ENCODE measurements at regions of chr2 and their contacts with region 1.

Region 1: GRCh38 chr2:200525882-200526651 is at the start of gene SGO2:
- DNase-seq: peak; percentile 96
- H3K4me3 Mint-ChIP-seq: peak within 1 kb of the TSS; percentile 98
- H3K27ac Mint-ChIP-seq: peak within 1 kb of the TSS; percentile 94
- H3K4me1 Mint-ChIP-seq: peaks cover 30% of the 10 kb centered on the region
- H3K27me3 Mint-ChIP-seq: no peaks in the 10 kb centered on the region
- total RNA-seq, gene SGO2: 30.3 and 32.3 TPM in 2 replicates

Region 2: DNA sequence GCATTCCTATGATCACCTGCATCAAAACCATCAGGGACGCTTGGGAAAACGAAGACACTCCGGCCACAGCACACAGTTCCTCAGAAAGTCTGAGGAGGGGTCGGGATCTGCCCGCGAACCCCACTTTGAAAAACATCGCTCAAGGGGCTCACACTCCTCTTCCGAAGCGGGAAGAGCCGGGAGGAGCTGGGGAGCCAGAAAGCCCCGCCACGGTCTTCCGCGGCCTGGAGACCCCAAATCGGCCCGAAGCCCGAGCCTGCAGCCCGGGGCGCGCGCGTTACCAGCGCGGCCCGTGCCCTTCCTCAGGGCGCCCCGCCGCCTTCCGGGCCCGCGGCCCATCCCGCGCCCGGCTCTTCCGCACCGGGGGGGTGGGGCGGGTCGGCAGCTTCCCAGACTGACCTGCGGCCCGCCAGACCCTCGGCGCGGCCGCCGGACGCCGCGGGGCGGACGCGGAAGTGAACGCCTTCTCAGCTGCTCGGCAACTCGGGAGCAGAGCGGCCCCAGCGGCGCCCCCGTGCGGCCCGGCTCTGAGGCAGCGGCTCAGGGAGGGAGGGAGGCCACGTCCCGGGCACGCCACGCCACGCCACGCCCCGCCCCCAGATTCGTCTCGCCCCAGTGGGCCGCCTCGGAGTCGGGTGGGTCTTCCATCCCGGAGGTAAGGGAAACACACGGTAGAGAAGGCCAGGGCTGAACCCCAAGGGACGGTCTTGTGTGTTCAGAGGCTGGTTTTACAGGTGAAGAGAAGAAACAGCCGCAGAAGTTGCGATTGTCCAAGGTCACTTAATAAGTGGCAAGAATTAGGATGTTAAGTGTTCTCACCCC is 16.2 kb before region 1 on chr2 and contains the start of gene KCTD18:
- intact Hi-C with region 1: loop called (anchors 1 kb)
- DNase-seq: peak; percentile 87
- H3K4me3 Mint-ChIP-seq: peak within 1 kb of the TSS; percentile 91
- H3K27ac Mint-ChIP-seq: peak within 1 kb of the TSS; percentile 77
- H3K4me1 Mint-ChIP-seq: peaks cover 11% of the 10 kb centered on the region
- H3K27me3 Mint-ChIP-seq: no peaks in the 10 kb centered on the region
- total RNA-seq, gene KCTD18: 12.3 and 14.1 TPM in 2 replicates

Region 3: DNA sequence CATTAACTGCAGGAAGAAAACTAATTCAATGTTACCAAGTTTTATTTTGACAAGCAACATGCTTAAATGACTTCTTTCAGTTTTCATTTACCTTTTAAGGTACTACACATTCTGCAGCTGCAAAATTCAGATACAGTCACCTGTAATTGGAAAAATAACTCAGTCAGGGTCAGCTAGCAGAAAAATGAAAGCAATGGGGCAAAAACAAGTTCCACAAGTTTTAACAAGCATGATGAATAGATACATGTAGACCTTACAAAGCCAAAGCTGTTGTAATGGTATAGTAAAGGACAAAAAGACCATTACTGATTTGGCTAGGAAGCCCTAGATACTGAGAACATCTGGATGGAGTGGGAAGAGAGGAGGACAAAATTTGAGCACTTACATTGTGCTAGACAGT is 433.2 kb after region 1 on chr2:
- intact Hi-C with region 1: no loop called
- DNase-seq: no peak
- H3K4me3 Mint-ChIP-seq: no peak overlapping the region
- H3K27ac Mint-ChIP-seq: peak overlapping the region; percentile 72
- H3K4me1 Mint-ChIP-seq: peaks cover 33% of the 10 kb centered on the region
- H3K27me3 Mint-ChIP-seq: no peaks in the 10 kb centered on the region

Measured in activated T-helper 2 cell treated with anti-CD3 and anti-CD28 coated beads, Interferon-gamma antibody, Interleukin-2, Interleukin-4, amounts not matched to agents 10 μg/mL and 5 μg/mL and 100 μg/mL, durations not matched to agents 14 hours and 24 hours and 36 hours (primary cell).